ENCODE measurements at regions of chr2 and their contacts with region 1.

Region 1: GRCh38 chr2:3575534-3576262 is 638 bp downstream of the RPS7 start:
- DNase-seq: no peak
- ATAC-seq: peak; percentile 8
- H3K4me3 ChIP-seq: peak overlapping the region; percentile 58 to 77
- H3K27ac ChIP-seq: peak overlapping the region; percentile 30 to 74
- H3K4me1 ChIP-seq: peaks cover 0 to 2% of the 10 kb centered on the region in 2 donors
- H3K27me3 ChIP-seq: no peaks in the 10 kb centered on the region

Region 2: GRCh38 chr2:3379647-3380534 is 195.8 kb before region 1 on chr2 and contains the start of gene TRAPPC12:
- intact Hi-C with region 1: loop called in 1 of 2 experiments (anchors 5 kb)
- DNase-seq: peak; percentile 93 to 96
- ATAC-seq: peak; percentile 95
- H3K4me3 ChIP-seq: peak within 1 kb of the TSS; percentile 61 to 72
- H3K27ac ChIP-seq: peak within 1 kb of the TSS; percentile 78 to 86
- H3K4me1 ChIP-seq: no peaks in the 10 kb centered on the region
- H3K27me3 ChIP-seq: no peaks in the 10 kb centered on the region
- total RNA-seq, gene TRAPPC12: 83.8 to 125 TPM

Measured in aorta (tissue), 5 donors.